PC-3 (cell line): ENCODE measurements at regions of chr9 and their contacts with region 1.

Region 1: GRCh38 chr9:127802576-127803443 is at the start of gene FPGS:
- DNase-seq: peak; percentile 72
- ATAC-seq: peak; percentile 71
- H3K4me3 ChIP-seq: peak within 1 kb of the TSS; percentile 88
- H3K27ac ChIP-seq: peak within 1 kb of the TSS; percentile 90
- H3K4me1 ChIP-seq: peaks cover 27% of the 10 kb centered on the region
- H3K27me3 ChIP-seq: no peaks in the 10 kb centered on the region
- CTCF ChIP-seq: no peak
- total RNA-seq, gene FPGS: 78.5 and 133 TPM in 2 replicates

Region 2: DNA sequence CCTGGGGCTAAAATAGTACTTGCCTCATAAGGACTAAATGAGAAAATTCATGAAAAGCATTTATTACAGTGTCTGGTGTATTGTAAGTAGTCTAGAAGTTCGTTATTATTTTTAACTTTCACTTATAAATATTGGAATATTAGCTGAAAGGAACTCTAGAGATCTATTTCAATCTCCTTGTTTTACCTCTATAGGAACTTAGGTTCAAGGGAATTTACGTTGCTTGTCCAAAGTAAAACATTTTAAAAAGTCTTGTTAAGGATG is 482.8 kb before region 1 on chr9:
- CTCF ChIA-PET with region 1: no interaction called
- POLR2A ChIA-PET with region 1: interaction called, 19 read pairs
- intact Hi-C with region 1: no loop called
- DNase-seq: no peak
- ATAC-seq: no peak
- H3K4me3 ChIP-seq: no peak overlapping the region
- H3K27ac ChIP-seq: no peak overlapping the region
- H3K4me1 ChIP-seq: peaks cover 13% of the 10 kb centered on the region
- H3K27me3 ChIP-seq: no peaks in the 10 kb centered on the region
- CTCF ChIP-seq: no peak

Region 3: GRCh38 chr9:127910613-127911205 is 107.9 kb after region 1 on chr9:
- CTCF ChIA-PET with region 1: no interaction called
- POLR2A ChIA-PET with region 1: no interaction called
- intact Hi-C with region 1: loop called (anchors 5 kb)
- DNase-seq: no peak
- ATAC-seq: peak; percentile 17; the same call in 1 of the 2 replicates
- H3K4me3 ChIP-seq: no peak overlapping the region
- H3K27ac ChIP-seq: no peak overlapping the region
- H3K4me1 ChIP-seq: peaks cover 6% of the 10 kb centered on the region; the same call in 1 of the 2 replicates
- H3K27me3 ChIP-seq: no peaks in the 10 kb centered on the region
- CTCF ChIP-seq: peak; percentile 41; the same call in 1 of the 2 replicates

Region 4: DNA sequence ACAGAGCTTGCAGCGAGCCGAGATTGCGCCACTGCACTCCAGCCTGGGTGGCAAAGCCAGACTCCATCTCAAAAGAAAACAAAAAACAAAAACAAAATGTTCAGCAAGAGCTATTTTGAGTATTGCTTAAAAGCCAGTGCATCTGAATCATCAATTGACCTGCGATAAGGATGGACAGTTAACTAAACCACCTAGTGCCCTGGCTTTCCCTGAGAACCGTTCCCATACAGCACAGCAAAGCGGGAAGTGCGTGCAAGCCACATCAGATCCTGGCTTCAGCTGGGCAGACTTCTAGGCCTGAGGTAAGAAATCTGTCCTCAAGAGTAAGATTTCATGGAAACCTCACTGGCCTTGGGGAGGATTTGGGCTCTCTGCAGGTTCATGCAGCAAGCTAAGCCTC is 851.1 kb after region 1 on chr9:
- CTCF ChIA-PET with region 1: no interaction called
- POLR2A ChIA-PET with region 1: no interaction called
- intact Hi-C with region 1: no loop called
- DNase-seq: no peak
- ATAC-seq: no peak
- H3K4me3 ChIP-seq: no peak overlapping the region
- H3K27ac ChIP-seq: no peak overlapping the region
- H3K4me1 ChIP-seq: peaks cover 3% of the 10 kb centered on the region
- H3K27me3 ChIP-seq: no peaks in the 10 kb centered on the region
- CTCF ChIP-seq: no peak